HCT116 (cell line): ENCODE measurements at regions of chr19 and their contacts with region 1.

Region 1: DNA sequence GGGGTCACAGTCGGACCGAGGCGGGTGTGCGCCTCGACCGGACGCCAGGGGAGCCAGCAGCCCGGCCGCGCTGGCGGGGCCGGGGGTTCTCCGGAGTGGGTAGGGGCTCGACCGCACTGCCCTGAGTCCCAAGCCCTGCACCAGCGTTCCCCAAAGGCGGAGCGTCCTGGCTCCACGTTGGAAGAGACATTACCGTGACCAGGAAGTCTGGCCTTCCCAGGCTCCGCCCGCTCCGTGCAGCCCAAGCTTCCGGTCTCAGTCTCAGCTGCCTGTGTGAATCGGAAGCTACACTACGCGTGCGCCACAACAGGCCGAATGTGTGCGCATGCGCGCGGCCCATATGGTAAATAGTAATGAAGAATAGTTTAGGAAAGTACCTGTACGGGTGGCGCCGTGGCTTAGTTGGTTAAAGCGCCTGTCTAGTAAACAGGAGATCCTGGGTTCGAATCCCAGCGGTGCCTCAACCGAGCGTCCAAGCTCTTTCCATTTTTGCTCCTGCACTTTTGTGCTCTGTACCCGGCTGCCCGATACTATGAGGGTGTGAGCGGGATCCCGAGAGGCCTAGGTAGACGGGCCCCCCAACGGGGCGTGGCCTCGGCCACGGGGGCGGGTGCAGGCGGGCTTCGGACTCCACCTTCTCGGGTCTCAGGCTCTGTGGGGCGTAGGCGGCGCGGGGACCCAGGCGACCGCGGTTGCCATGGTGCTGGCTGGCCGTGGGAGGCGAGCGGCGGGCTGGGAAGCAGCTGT is 17.3 kb upstream of the LRP3 start:
- DNase-seq: peak; percentile 97
- ATAC-seq: peak; percentile 92
- H3K4me3 ChIP-seq: peak overlapping the region; percentile 85 to 87
- H3K27ac ChIP-seq: peak overlapping the region; percentile 89
- H3K4me1 ChIP-seq: peaks cover 20 to 31% of the 10 kb centered on the region in 2 experiments
- H3K27me3 ChIP-seq: no peaks in the 10 kb centered on the region
- CTCF ChIP-seq: peak in 2 of 3 experiments; percentile 6 to 12; a peak in 1 of 6 replicates
- POLR2A ChIP-seq: peak; percentile 95
- RAD21 ChIP-seq: no peak

Region 2: DNA sequence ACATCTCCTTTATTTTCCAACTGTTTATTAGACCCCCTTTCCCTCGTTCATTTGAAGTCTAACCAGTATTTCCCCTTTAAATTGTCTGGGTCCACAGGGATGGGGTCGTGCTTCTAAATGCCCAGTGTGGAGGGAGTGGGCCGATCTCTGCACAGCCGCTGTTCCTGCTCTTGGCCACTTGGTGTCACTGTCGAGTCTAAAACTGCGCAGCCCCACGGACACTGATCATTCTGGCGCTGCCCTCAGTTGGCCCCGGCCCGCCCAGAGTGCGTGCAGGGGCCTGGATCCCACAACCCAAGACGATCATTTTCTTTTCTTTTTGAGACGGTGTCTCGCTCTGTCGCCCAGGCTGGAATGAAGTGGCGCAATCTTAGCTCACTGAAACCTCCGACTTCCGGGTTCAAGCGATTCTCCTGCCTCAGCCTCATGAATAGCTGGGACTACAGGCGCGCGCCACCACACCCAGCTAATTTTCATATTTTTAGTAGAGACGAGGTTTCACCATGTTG is 32.9 kb before region 1 on chr19:
- CTCF ChIA-PET with region 1: interaction called, 3 read pairs
- POLR2A ChIA-PET with region 1: interaction called, 5 read pairs
- RAD21 ChIA-PET with region 1: no interaction called
- intact Hi-C with region 1: loop called (anchors 2 kb)
- DNase-seq: peak; percentile 38
- ATAC-seq: peak; percentile 100
- H3K4me3 ChIP-seq: no peak overlapping the region
- H3K27ac ChIP-seq: no peak overlapping the region
- H3K4me1 ChIP-seq: peaks cover 0 to 5% of the 10 kb centered on the region in 2 experiments; a peak in 1 of 4 replicates
- H3K27me3 ChIP-seq: no peaks in the 10 kb centered on the region
- CTCF ChIP-seq: peak; percentile 75 to 92 (median 92); a peak in 5 of 6 replicates
- POLR2A ChIP-seq: no peak
- RAD21 ChIP-seq: peak; percentile 83

Region 3: GRCh38 chr19:33705090-33705847 is 528.4 kb after region 1 on chr19:
- CTCF ChIA-PET with region 1: no interaction called
- POLR2A ChIA-PET with region 1: no interaction called
- RAD21 ChIA-PET with region 1: no interaction called
- intact Hi-C with region 1: no loop called
- DNase-seq: no peak
- ATAC-seq: no peak
- H3K4me3 ChIP-seq: no peak overlapping the region
- H3K27ac ChIP-seq: no peak overlapping the region
- H3K4me1 ChIP-seq: no peaks in the 10 kb centered on the region
- H3K27me3 ChIP-seq: peaks cover 32% of the 10 kb centered on the region
- CTCF ChIP-seq: no peak
- POLR2A ChIP-seq: no peak
- RAD21 ChIP-seq: peak; percentile 19; the same call in 1 of the 2 replicates

Region 4: GRCh38 chr19:34359140-34359953 is 1182.5 kb after region 1 on chr19:
- CTCF ChIA-PET with region 1: no interaction called
- POLR2A ChIA-PET with region 1: no interaction called
- RAD21 ChIA-PET with region 1: no interaction called
- intact Hi-C with region 1: loop called (anchors 10 kb)
- DNase-seq: peak; percentile 98
- ATAC-seq: peak; percentile 98
- H3K4me3 ChIP-seq: peak overlapping the region; percentile 56 to 58
- H3K27ac ChIP-seq: peak overlapping the region; percentile 79
- H3K4me1 ChIP-seq: peaks cover 18 to 34% of the 10 kb centered on the region in 2 experiments
- H3K27me3 ChIP-seq: no peaks in the 10 kb centered on the region
- CTCF ChIP-seq: peak in 2 of 3 experiments; percentile 62 to 70; a peak in 5 of 6 replicates
- POLR2A ChIP-seq: no peak
- RAD21 ChIP-seq: no peak